Naive thymus-derived CD4-positive, alpha-beta T cell (primary cell): ENCODE measurements at regions of chr11 and their contacts with region 1.

Region 1: GRCh38 chr11:114059278-114059983 is at the start of gene ZBTB16:
- DNase-seq: peak; percentile 37 to 72 (median 58)
- ATAC-seq: peak; percentile 74
- H3K4me3 ChIP-seq: peak within 1 kb of the TSS; percentile 70
- H3K4me3 Mint-ChIP-seq: peak within 1 kb of the TSS; percentile 89 to 95 (median 92)
- H3K27ac ChIP-seq: peak within 1 kb of the TSS; percentile 14
- H3K27ac Mint-ChIP-seq: peak within 1 kb of the TSS in 8 of 9 donors; percentile 21 to 81 (median 55)
- H3K4me1 ChIP-seq: peaks cover 0 to 10% of the 10 kb centered on the region in 2 donors
- H3K4me1 Mint-ChIP-seq: peaks cover 0 to 10% (median 7%) of the 10 kb centered on the region in 7 donors
- H3K27me3 ChIP-seq: no peaks in the 10 kb centered on the region
- H3K27me3 Mint-ChIP-seq: peaks cover 16 to 76% (median 24%) of the 10 kb centered on the region in 5 donors
- total RNA-seq, gene ZBTB16: 3.0 to 22.1 (median 7.2) TPM

Region 2: GRCh38 chr11:113896156-113896879 is 163.1 kb before region 1 on chr11:
- CTCF ChIA-PET with region 1: no interaction called
- POLR2A ChIA-PET with region 1: no interaction called
- intact Hi-C with region 1: loop called in 1 of 2 experiments (anchors 1 kb)
- DNase-seq: peak in 5 of 9 donors; percentile 24 to 42 (median 37)
- ATAC-seq: peak; percentile 80
- H3K4me3 ChIP-seq: no peak overlapping the region
- H3K4me3 Mint-ChIP-seq: no peak overlapping the region
- H3K27ac ChIP-seq: no peak overlapping the region
- H3K27ac Mint-ChIP-seq: no peak overlapping the region
- H3K4me1 ChIP-seq: no peaks in the 10 kb centered on the region
- H3K4me1 Mint-ChIP-seq: peaks cover 0 to 4% (median 0%) of the 10 kb centered on the region in 7 donors
- H3K27me3 ChIP-seq: no peaks in the 10 kb centered on the region
- H3K27me3 Mint-ChIP-seq: peaks cover 0 to 9% (median 0%) of the 10 kb centered on the region in 5 donors

Region 3: GRCh38 chr11:114075891-114076441 is 16.5 kb after region 1 on chr11:
- CTCF ChIA-PET with region 1: interaction called, 3 read pairs
- POLR2A ChIA-PET with region 1: interaction called, 5 read pairs
- intact Hi-C with region 1: loop called in 1 of 2 experiments (anchors 1 kb)
- DNase-seq: peak in 6 of 9 donors; percentile 32 to 48 (median 36)
- ATAC-seq: peak; percentile 40
- H3K4me3 ChIP-seq: no peak overlapping the region
- H3K4me3 Mint-ChIP-seq: peak overlapping the region in 7 of 10 donors; percentile 20 to 57 (median 43)
- H3K27ac ChIP-seq: no peak overlapping the region
- H3K27ac Mint-ChIP-seq: peak overlapping the region in 3 of 9 donors; percentile 5 to 24 (median 20)
- H3K4me1 ChIP-seq: peaks cover 32 to 68% of the 10 kb centered on the region in 2 donors
- H3K4me1 Mint-ChIP-seq: peaks cover 29 to 79% (median 59%) of the 10 kb centered on the region in 7 donors
- H3K27me3 ChIP-seq: no peaks in the 10 kb centered on the region
- H3K27me3 Mint-ChIP-seq: peaks cover 0 to 44% (median 0%) of the 10 kb centered on the region in 5 donors

Region 4: GRCh38 chr11:114180301-114181055 is 121.0 kb after region 1 on chr11:
- CTCF ChIA-PET with region 1: interaction called, 7 read pairs
- POLR2A ChIA-PET with region 1: interaction called, 18 read pairs
- intact Hi-C with region 1: loop called in 1 of 2 experiments (anchors 5 kb)
- DNase-seq: peak in 1 of 9 donors; percentile 28
- ATAC-seq: peak; percentile 47
- H3K4me3 ChIP-seq: peak overlapping the region; percentile 12
- H3K4me3 Mint-ChIP-seq: peak overlapping the region in 7 of 10 donors; percentile 26 to 75 (median 63)
- H3K27ac ChIP-seq: no peak overlapping the region
- H3K27ac Mint-ChIP-seq: peak overlapping the region in 7 of 9 donors; percentile 46 to 96 (median 85)
- H3K4me1 ChIP-seq: peaks cover 48 to 74% of the 10 kb centered on the region in 2 donors
- H3K4me1 Mint-ChIP-seq: peaks cover 54 to 98% (median 83%) of the 10 kb centered on the region in 7 donors
- H3K27me3 ChIP-seq: no peaks in the 10 kb centered on the region
- H3K27me3 Mint-ChIP-seq: peaks cover 0 to under 1% (median 0%) of the 10 kb centered on the region in 5 donors

Region 5: GRCh38 chr11:114197799-114198500 is 138.5 kb after region 1 on chr11:
- CTCF ChIA-PET with region 1: interaction called, 5 read pairs
- POLR2A ChIA-PET with region 1: interaction called, 6 read pairs
- intact Hi-C with region 1: loop called (anchors 1 kb)
- DNase-seq: no peak
- ATAC-seq: no peak
- H3K4me3 ChIP-seq: no peak overlapping the region
- H3K4me3 Mint-ChIP-seq: no peak overlapping the region
- H3K27ac ChIP-seq: no peak overlapping the region
- H3K27ac Mint-ChIP-seq: no peak overlapping the region
- H3K4me1 ChIP-seq: peaks cover 0 to 5% of the 10 kb centered on the region in 2 donors
- H3K4me1 Mint-ChIP-seq: peaks cover 6 to 30% (median 25%) of the 10 kb centered on the region in 7 donors
- H3K27me3 ChIP-seq: no peaks in the 10 kb centered on the region
- H3K27me3 Mint-ChIP-seq: no peaks in the 10 kb centered on the region

Region 6: DNA sequence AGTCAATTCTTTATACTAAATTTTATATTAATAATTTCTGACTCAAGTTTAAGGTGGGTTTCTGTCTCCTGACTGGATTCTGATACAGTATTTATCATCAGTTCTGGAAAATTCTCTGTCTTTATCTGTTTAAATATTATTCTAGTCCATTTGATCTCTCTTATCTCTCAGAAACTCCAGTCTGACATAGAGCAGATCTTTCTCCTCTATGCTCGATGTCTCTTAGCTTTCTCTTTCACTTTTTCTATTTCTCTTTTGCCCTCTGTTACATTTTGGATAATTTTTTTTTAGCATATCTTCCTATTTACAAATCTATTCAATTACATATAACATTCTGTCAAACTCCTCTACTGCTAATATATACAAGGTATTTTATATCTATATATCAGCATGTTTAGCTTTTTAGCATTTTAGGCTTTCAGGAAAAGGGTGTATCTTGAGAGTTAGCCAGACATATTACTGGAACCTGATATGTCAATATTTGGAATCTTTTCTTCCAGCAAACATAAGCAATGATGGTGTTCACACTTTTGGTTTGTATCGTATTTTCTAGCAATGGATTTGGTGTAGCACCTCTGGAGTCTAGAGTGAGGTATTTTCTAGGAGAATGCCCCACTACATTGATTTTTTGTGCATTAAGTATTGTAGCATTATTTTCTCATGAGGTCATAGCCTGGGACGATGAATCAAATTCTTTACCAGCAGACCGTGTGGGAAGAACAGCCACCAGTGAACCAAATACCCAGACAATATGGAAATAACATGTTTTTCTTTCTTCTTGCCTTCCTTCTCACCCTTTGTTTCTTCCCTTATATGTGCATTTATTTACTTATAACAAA is 232.6 kb after region 1 on chr11:
- CTCF ChIA-PET with region 1: no interaction called
- POLR2A ChIA-PET with region 1: no interaction called
- intact Hi-C with region 1: no loop called
- DNase-seq: no peak
- ATAC-seq: no peak
- H3K4me3 ChIP-seq: no peak overlapping the region
- H3K4me3 Mint-ChIP-seq: peak overlapping the region in 6 of 10 donors; percentile 2 to 75 (median 18)
- H3K27ac ChIP-seq: no peak overlapping the region
- H3K27ac Mint-ChIP-seq: peak overlapping the region in 1 of 9 donors; percentile 35
- H3K4me1 ChIP-seq: no peaks in the 10 kb centered on the region
- H3K4me1 Mint-ChIP-seq: peaks cover 0 to 8% (median 0%) of the 10 kb centered on the region in 7 donors
- H3K27me3 ChIP-seq: no peaks in the 10 kb centered on the region
- H3K27me3 Mint-ChIP-seq: peaks cover 0 to 32% (median 5%) of the 10 kb centered on the region in 5 donors

Region 7: DNA sequence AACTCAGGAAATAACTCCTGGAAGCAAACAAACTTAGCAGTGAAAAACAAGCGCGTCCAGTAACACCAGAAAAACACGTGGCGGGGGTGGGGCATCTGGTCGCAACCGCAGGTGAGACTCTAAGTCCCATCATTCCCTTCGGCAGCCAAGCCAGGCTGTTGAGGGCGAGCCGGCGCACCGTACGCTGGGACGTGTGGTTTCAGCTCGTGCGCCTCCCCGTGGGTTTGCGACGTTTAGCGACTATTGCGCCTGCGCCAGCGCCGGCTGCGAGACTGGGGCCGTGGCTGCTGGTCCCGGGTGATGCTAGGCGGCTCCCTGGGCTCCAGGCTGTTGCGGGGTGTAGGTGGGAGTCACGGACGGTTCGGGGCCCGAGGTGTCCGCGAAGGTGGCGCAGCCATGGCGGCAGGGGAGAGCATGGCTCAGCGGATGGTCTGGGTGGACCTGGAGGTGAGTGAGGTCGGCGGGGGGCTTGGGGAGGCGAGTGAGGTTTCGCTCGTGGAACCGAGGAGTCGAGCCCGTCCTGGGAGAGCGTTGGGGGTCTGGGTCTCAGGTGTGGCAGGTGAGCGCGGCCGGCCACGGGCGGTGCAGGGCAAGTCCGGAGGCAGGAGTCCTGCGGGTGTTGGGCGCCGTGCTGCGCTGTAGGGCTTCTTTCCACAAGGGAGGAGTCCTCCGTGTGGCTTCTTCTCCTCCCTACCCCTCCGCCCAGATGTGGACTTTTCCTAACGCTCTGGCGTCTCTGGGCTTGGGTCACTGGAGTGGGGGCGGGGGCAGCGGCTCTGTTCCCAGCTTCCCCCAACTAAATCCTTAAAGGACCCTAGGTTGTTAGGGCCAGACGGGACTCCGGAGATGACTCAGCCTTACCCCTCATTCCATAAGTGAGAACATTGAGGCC is 380.0 kb after region 1 on chr11 and contains the start of gene REXO2:
- CTCF ChIA-PET with region 1: no interaction called
- POLR2A ChIA-PET with region 1: no interaction called
- intact Hi-C with region 1: loop called in 1 of 2 experiments (anchors 1 kb)
- DNase-seq: peak; percentile 89 to 94 (median 92)
- ATAC-seq: peak; percentile 100
- H3K4me3 ChIP-seq: peak within 1 kb of the TSS; percentile 96
- H3K4me3 Mint-ChIP-seq: peak within 1 kb of the TSS; percentile 92 to 98 (median 96)
- H3K27ac ChIP-seq: peak within 1 kb of the TSS; percentile 79
- H3K27ac Mint-ChIP-seq: peak within 1 kb of the TSS; percentile 84 to 95 (median 93)
- H3K4me1 ChIP-seq: peaks cover 18 to 20% of the 10 kb centered on the region in 2 donors
- H3K4me1 Mint-ChIP-seq: peaks cover 22 to 56% (median 36%) of the 10 kb centered on the region in 7 donors
- H3K27me3 ChIP-seq: no peaks in the 10 kb centered on the region
- H3K27me3 Mint-ChIP-seq: peaks cover 0 to 4% (median 0%) of the 10 kb centered on the region in 5 donors
- total RNA-seq, gene REXO2: 33.8 to 105 (median 56.0) TPM